ENCODE measurements at regions of chr3 and their contacts with region 1.

Region 1: GRCh38 chr3:197749601-197750395 is at the start of gene FYTTD1:
- DNase-seq: peak; percentile 86 to 90 (median 88)
- H3K4me3 ChIP-seq: peak within 1 kb of the TSS; percentile 75 to 89
- H3K4me3 Mint-ChIP-seq: peak within 1 kb of the TSS; percentile 93 to 99 (median 98)
- H3K27ac ChIP-seq: peak within 1 kb of the TSS; percentile 86
- H3K27ac Mint-ChIP-seq: peak within 1 kb of the TSS; percentile 97 to 99 (median 99)
- H3K4me1 ChIP-seq: peaks cover 50% of the 10 kb centered on the region
- H3K4me1 Mint-ChIP-seq: peaks cover 26 to 54% (median 39%) of the 10 kb centered on the region in 4 donors
- H3K27me3 ChIP-seq: no peaks in the 10 kb centered on the region
- H3K27me3 Mint-ChIP-seq: peaks cover 0 to 2% of the 10 kb centered on the region in 2 donors
- total RNA-seq, gene FYTTD1: 60.0 to 60.2 TPM

Region 2: GRCh38 chr3:197711973-197712707 is 37.7 kb before region 1 on chr3:
- CTCF ChIA-PET with region 1: interaction called, 11 read pairs
- POLR2A ChIA-PET with region 1: interaction called, 31 read pairs
- intact Hi-C with region 1: loop called (anchors 1 kb)
- DNase-seq: peak; percentile 86 to 97 (median 90)
- H3K4me3 ChIP-seq: peak overlapping the region in 1 of 2 donors; percentile 30
- H3K4me3 Mint-ChIP-seq: peak overlapping the region; percentile 81 to 97 (median 92)
- H3K27ac ChIP-seq: peak overlapping the region; percentile 83
- H3K27ac Mint-ChIP-seq: peak overlapping the region; percentile 85 to 99 (median 99)
- H3K4me1 ChIP-seq: peaks cover 17% of the 10 kb centered on the region
- H3K4me1 Mint-ChIP-seq: peaks cover 17 to 20% (median 18%) of the 10 kb centered on the region in 4 donors
- H3K27me3 ChIP-seq: no peaks in the 10 kb centered on the region
- H3K27me3 Mint-ChIP-seq: no peaks in the 10 kb centered on the region

Region 3: DNA sequence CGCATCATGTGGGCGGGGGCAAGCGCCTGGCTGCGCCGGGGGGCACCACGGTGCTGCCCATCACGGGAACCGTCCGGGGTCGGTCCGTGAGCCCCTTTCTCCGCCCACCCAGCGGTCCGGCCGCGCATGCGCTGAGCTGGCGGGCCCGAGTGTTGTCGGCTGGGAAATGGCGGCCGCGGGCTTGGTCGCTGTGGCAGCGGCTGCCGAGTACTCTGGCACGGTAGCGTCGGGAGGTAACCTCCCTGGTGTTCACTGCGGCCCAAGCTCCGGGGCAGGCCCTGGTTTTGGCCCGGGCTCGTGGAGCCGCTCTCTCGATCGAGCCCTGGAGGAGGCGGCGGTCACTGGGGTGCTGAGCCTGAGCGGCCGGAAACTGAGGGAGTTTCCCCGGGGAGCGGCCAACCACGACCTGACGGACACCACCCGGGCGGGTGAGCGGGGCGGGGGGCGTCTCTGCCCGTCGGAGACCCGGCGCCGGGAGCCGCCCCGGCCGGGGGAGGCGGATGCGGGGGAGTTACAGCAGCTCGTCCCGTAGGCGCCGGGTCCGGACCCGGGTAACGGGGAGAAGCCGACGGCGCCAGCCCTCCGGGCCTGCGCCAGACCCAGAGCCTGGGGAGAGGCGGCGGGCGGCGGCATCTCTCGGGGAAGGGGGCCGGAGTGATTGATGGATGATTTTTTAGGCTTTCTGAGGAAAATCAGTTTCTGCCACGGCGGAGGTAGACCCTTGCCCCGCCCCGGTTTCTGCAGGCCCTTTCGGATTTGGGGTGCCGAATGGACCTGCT is 41.5 kb after region 1 on chr3 and contains the start of gene LRCH3:
- CTCF ChIA-PET with region 1: interaction called, 4 read pairs
- POLR2A ChIA-PET with region 1: interaction called, 42 read pairs
- intact Hi-C with region 1: loop called (anchors 2 kb)
- DNase-seq: peak; percentile 77 to 83 (median 82)
- H3K4me3 ChIP-seq: peak within 1 kb of the TSS; percentile 91 to 96
- H3K4me3 Mint-ChIP-seq: peak within 1 kb of the TSS; percentile 94 to 99 (median 98)
- H3K27ac ChIP-seq: peak within 1 kb of the TSS; percentile 94
- H3K27ac Mint-ChIP-seq: peak within 1 kb of the TSS; percentile 95 to 99 (median 98)
- H3K4me1 ChIP-seq: peaks cover 33% of the 10 kb centered on the region
- H3K4me1 Mint-ChIP-seq: peaks cover 27 to 49% (median 37%) of the 10 kb centered on the region in 4 donors
- H3K27me3 ChIP-seq: no peaks in the 10 kb centered on the region
- H3K27me3 Mint-ChIP-seq: no peaks in the 10 kb centered on the region
- total RNA-seq, gene LRCH3: 76.0 to 87.7 TPM

Region 4: GRCh38 chr3:197847866-197848401 is 98.1 kb after region 1 on chr3:
- CTCF ChIA-PET with region 1: interaction called, 3 read pairs
- POLR2A ChIA-PET with region 1: interaction called, 3 read pairs
- intact Hi-C with region 1: loop called (anchors 2 kb)
- DNase-seq: peak; percentile 45 to 59 (median 49)
- H3K4me3 ChIP-seq: peak overlapping the region in 1 of 2 donors; percentile 34
- H3K4me3 Mint-ChIP-seq: peak overlapping the region; percentile 77 to 91 (median 84)
- H3K27ac ChIP-seq: peak overlapping the region; percentile 63
- H3K27ac Mint-ChIP-seq: peak overlapping the region; percentile 65 to 96 (median 94)
- H3K4me1 ChIP-seq: peaks cover 28% of the 10 kb centered on the region
- H3K4me1 Mint-ChIP-seq: peaks cover 16 to 32% (median 27%) of the 10 kb centered on the region in 4 donors
- H3K27me3 ChIP-seq: no peaks in the 10 kb centered on the region
- H3K27me3 Mint-ChIP-seq: no peaks in the 10 kb centered on the region

Region 5: GRCh38 chr3:198071602-198072285 is 321.9 kb after region 1 on chr3:
- CTCF ChIA-PET with region 1: no interaction called
- POLR2A ChIA-PET with region 1: no interaction called
- intact Hi-C with region 1: no loop called
- DNase-seq: peak in 1 of 5 donors; percentile 48
- H3K4me3 ChIP-seq: no peak overlapping the region
- H3K4me3 Mint-ChIP-seq: no peak overlapping the region
- H3K27ac ChIP-seq: no peak overlapping the region
- H3K27ac Mint-ChIP-seq: no peak overlapping the region
- H3K4me1 ChIP-seq: no peaks in the 10 kb centered on the region
- H3K4me1 Mint-ChIP-seq: peaks cover 4 to 6% (median 6%) of the 10 kb centered on the region in 4 donors
- H3K27me3 ChIP-seq: no peaks in the 10 kb centered on the region
- H3K27me3 Mint-ChIP-seq: peaks cover 0 to 6% of the 10 kb centered on the region in 2 donors